ENCODE measurements at regions of chr5 and their contacts with region 1.

Region 1: DNA sequence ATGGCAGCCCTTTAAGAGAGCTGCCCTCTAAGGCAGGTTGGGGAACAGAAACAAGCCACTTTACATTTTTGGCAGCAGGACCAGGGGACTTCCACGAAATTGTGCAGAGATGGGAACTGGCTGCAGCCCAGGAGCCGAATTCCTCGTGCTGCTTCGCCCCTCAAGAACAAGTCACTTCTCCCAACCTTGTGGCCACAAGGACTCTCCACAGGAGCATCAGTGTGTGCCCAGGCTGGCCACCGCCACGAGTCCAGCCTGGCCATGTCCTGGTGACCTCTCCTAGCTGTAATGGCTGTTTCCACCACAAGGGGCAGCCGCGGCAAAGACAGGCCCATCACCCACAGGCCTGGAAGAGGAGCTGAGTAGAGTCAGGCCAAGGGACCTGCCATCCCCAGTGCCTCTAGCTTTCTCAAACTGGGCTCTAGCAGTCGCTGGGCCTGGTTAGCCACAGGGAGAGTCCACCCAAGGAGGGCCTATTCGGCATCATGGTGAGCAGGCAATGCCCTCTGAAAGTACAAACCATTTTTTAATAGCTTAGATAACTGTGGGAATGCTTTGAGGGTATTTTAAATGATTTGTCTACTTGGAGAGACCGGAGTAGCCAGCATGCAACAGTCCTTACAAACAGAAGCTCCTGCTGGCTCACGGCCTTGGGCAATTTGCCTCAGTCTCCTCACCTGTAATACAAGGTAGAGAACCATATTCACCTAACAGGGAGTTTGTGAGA is 129.0 kb downstream of the COL23A1 start:
- DNase-seq: peak; percentile 83 to 85 (median 84)
- ATAC-seq: peak; percentile 100
- H3K4me3 ChIP-seq: no peak overlapping the region
- H3K27ac ChIP-seq: no peak overlapping the region
- H3K4me1 ChIP-seq: peaks cover 0 to 10% of the 10 kb centered on the region in 2 experiments; a peak in 3 of 5 replicates
- H3K27me3 ChIP-seq: peaks cover 0 to 6% of the 10 kb centered on the region in 2 experiments; a peak in 1 of 5 replicates
- CTCF ChIP-seq: peak; percentile 85 to 95 (median 87)
- EP300 ChIP-seq: no peak
- POLR2A ChIP-seq: no peak
- RAD21 ChIP-seq: peak; percentile 65 to 68

Region 2: DNA sequence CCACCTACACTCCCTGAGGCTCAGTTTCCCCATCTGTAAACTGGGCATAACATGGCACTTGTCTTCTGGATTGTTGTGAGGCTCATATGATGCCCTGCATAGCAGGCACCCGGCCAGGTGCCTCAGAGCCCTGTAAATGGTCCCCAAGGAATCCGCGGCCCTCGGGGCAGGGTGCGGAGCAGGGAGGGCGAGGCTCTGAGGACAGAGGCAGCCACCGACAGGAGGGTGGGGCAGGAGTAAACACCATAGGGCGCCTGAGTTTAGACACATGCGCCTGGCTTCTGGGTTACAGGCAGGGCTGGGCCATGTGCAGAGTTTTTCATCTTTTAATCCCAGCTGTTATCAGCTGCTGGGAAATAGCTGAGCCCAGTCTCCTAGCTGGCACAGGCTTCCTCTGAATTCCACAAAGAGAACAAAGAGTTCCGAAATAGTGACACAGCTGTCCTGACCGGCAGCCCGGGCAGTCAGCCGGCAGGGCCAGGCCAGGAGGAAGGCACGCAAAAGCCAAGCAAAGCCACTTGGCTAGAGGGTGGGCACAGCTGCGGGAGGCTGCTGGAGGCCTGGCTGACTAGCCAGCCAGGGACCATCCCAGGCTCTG is 129.7 kb before region 1 on chr5:
- CTCF ChIA-PET with region 1: no interaction called
- POLR2A ChIA-PET with region 1: no interaction called
- in situ Hi-C with region 1: no loop called
- intact Hi-C with region 1: no loop called
- DNase-seq: no peak
- ATAC-seq: 0 out of 3 replicates have a peak, but pooled peaks have one; percentile 24
- H3K4me3 ChIP-seq: no peak overlapping the region
- H3K27ac ChIP-seq: no peak overlapping the region
- H3K4me1 ChIP-seq: peaks cover 0 to 10% of the 10 kb centered on the region in 2 experiments; a peak in 2 of 5 replicates
- H3K27me3 ChIP-seq: peaks cover 31 to 91% of the 10 kb centered on the region in 2 experiments; a peak in 4 of 5 replicates
- CTCF ChIP-seq: no peak
- EP300 ChIP-seq: no peak
- POLR2A ChIP-seq: no peak
- RAD21 ChIP-seq: no peak

Region 3: DNA sequence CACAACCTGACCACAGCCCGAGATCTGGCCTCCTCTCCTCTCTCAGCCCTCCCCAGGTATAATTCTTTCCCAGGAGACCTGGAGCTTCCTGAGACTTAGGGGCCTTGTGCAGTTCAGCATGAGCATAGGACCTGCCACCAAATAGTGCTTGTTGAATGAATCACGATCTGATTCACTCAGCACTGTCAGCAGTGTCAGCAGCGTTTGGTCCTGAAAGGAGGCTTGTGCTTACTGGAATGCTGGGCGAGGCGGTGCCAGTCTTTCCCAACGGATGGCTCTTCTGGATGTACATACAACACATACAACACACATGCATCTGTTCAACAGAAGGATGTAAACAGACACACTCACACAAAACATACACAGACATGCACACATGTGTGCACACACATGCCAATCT is 44.2 kb before region 1 on chr5:
- CTCF ChIA-PET with region 1: no interaction called
- POLR2A ChIA-PET with region 1: interaction called, 3 read pairs
- in situ Hi-C with region 1: no loop called
- intact Hi-C with region 1: loop called (anchors 1 kb)
- DNase-seq: no peak
- ATAC-seq: no peak
- H3K4me3 ChIP-seq: no peak overlapping the region
- H3K27ac ChIP-seq: no peak overlapping the region
- H3K4me1 ChIP-seq: peaks cover 9 to 11% of the 10 kb centered on the region in 2 experiments
- H3K27me3 ChIP-seq: peaks cover 7 to 42% of the 10 kb centered on the region in 2 experiments; a peak in 4 of 5 replicates
- CTCF ChIP-seq: no peak
- EP300 ChIP-seq: no peak
- POLR2A ChIP-seq: no peak
- RAD21 ChIP-seq: no peak